T-cell (primary cell): ENCODE measurements at regions of chr18 and their contacts with region 1.

Region 1: GRCh38 chr18:45722899-45723298 is 1.1 kb upstream of the SLC14A1 start:
- DNase-seq: peak; percentile 18 to 64 (median 52)
- ATAC-seq: peak; percentile 58 to 77 (median 68)
- H3K4me3 ChIP-seq: no peak overlapping the region
- H3K4me3 Mint-ChIP-seq: no peak overlapping the region
- H3K27ac ChIP-seq: no peak overlapping the region
- H3K27ac Mint-ChIP-seq: no peak overlapping the region
- H3K4me1 ChIP-seq: no peaks in the 10 kb centered on the region
- H3K4me1 Mint-ChIP-seq: peaks cover 0 to 5% (median 0%) of the 10 kb centered on the region in 3 donors
- H3K27me3 ChIP-seq: no peaks in the 10 kb centered on the region
- H3K27me3 Mint-ChIP-seq: peaks cover 2 to 3% of the 10 kb centered on the region in 2 donors

Region 2: GRCh38 chr18:45879681-45880655 is 157.1 kb after region 1 on chr18:
- CTCF ChIA-PET with region 1: interaction called in 1 of 2 experiments, 10 read pairs
- POLR2A ChIA-PET with region 1: no interaction called
- DNase-seq: peak; percentile 26 to 81 (median 64)
- ATAC-seq: peak; percentile 92 to 96 (median 94)
- H3K4me3 ChIP-seq: no peak overlapping the region
- H3K4me3 Mint-ChIP-seq: no peak overlapping the region
- H3K27ac ChIP-seq: no peak overlapping the region
- H3K27ac Mint-ChIP-seq: peak overlapping the region in 1 of 2 donors; percentile 34
- H3K4me1 ChIP-seq: peaks cover 5 to 10% of the 10 kb centered on the region in 2 experiments
- H3K4me1 Mint-ChIP-seq: peaks cover 14 to 17% (median 16%) of the 10 kb centered on the region in 3 donors
- H3K27me3 ChIP-seq: no peaks in the 10 kb centered on the region
- H3K27me3 Mint-ChIP-seq: no peaks in the 10 kb centered on the region